CD8-positive, alpha-beta T cell (primary cell): ENCODE measurements at regions of chr19 and their contacts with region 1.

Region 1: GRCh38 chr19:796692-797527 is at the start of gene PTBP1:
- DNase-seq: peak in 8 of 9 experiments; percentile 98 to 100 (median 99)
- ATAC-seq: peak; percentile 85
- H3K4me3 ChIP-seq: peak within 1 kb of the TSS; percentile 78 to 79
- H3K4me3 Mint-ChIP-seq: peak within 1 kb of the TSS; percentile 93
- H3K27ac ChIP-seq: peak within 1 kb of the TSS; percentile 62 to 75
- H3K27ac Mint-ChIP-seq: peak within 1 kb of the TSS; percentile 91
- H3K4me1 ChIP-seq: peaks cover 40% of the 10 kb centered on the region
- H3K4me1 Mint-ChIP-seq: peaks cover 32% of the 10 kb centered on the region
- H3K27me3 ChIP-seq: no peaks in the 10 kb centered on the region
- H3K27me3 Mint-ChIP-seq: no peaks in the 10 kb centered on the region
- CTCF ChIP-seq: no peak
- total RNA-seq, gene PTBP1: 248 to 266 TPM

Region 2: DNA sequence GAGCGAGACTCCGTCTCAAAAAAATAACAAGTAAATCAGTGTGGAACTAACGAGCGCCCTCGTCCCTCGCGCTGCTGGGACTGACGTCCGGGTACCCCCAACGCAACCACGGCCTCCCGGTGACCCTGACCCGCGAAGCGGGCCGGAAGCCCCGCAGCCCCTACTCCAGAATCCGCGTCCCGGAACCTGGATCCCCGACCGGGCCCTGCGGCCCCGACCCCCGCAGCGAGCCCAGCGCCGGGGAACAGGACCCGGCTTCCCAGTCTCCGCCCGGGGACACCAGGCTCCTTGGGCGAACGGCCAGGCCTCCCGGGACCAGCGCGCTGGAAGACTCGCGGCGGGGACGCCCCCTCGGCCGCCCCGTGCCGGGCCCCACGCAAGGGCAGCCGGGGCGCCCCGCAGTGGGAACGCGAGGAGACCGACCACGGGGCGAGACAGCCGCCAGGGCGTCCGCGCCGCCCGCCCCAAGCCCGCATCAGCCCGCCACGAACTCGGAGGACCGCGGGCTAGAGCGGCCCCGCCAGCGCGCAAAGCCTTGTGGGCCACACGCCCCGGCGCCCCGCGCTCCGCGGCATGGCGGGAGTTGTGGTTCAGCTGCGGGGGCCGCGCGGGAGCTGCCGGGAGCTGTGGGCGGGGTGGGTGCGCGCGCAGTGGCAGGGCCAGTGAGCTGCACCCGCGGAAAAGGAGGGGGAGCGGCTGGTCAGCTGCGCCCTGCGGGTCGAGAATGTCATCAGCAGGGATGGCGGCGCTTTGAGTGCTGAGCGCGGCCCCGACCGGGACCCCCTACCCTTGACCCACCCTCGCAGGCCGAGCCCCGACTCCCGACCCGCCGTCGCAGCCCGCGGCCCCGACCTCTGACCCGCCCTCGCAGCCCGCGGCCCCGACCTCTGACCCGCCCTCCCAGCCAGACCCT is 308.1 kb before region 1 on chr19:
- CTCF ChIA-PET with region 1: no interaction called
- POLR2A ChIA-PET with region 1: no interaction called
- intact Hi-C with region 1: loop called in 1 of 2 experiments (anchors 5 kb)
- DNase-seq: peak; percentile 85 to 96 (median 93)
- ATAC-seq: peak; percentile 93
- H3K4me3 ChIP-seq: peak overlapping the region; percentile 55 to 84
- H3K4me3 Mint-ChIP-seq: peak overlapping the region; percentile 83
- H3K27ac ChIP-seq: peak overlapping the region; percentile 74 to 80
- H3K27ac Mint-ChIP-seq: peak overlapping the region; percentile 85
- H3K4me1 ChIP-seq: peaks cover 6% of the 10 kb centered on the region
- H3K4me1 Mint-ChIP-seq: peaks cover 11% of the 10 kb centered on the region
- H3K27me3 ChIP-seq: no peaks in the 10 kb centered on the region
- H3K27me3 Mint-ChIP-seq: peaks cover 8% of the 10 kb centered on the region
- CTCF ChIP-seq: no peak

Region 3: GRCh38 chr19:572140-572742 is 224.7 kb before region 1 on chr19 and contains the start of gene BSG:
- CTCF ChIA-PET with region 1: no interaction called
- POLR2A ChIA-PET with region 1: no interaction called
- intact Hi-C with region 1: loop called (anchors 1 kb)
- DNase-seq: peak; percentile 96 to 100 (median 99)
- ATAC-seq: peak; percentile 79
- H3K4me3 ChIP-seq: peak within 1 kb of the TSS; percentile 85 to 98
- H3K4me3 Mint-ChIP-seq: peak within 1 kb of the TSS; percentile 89
- H3K27ac ChIP-seq: peak within 1 kb of the TSS; percentile 86 to 90
- H3K27ac Mint-ChIP-seq: peak within 1 kb of the TSS; percentile 96
- H3K4me1 ChIP-seq: peaks cover 26% of the 10 kb centered on the region
- H3K4me1 Mint-ChIP-seq: peaks cover 38% of the 10 kb centered on the region
- H3K27me3 ChIP-seq: no peaks in the 10 kb centered on the region
- H3K27me3 Mint-ChIP-seq: no peaks in the 10 kb centered on the region
- CTCF ChIP-seq: no peak
- total RNA-seq, gene BSG: 76.2 to 81.2 TPM

Region 4: DNA sequence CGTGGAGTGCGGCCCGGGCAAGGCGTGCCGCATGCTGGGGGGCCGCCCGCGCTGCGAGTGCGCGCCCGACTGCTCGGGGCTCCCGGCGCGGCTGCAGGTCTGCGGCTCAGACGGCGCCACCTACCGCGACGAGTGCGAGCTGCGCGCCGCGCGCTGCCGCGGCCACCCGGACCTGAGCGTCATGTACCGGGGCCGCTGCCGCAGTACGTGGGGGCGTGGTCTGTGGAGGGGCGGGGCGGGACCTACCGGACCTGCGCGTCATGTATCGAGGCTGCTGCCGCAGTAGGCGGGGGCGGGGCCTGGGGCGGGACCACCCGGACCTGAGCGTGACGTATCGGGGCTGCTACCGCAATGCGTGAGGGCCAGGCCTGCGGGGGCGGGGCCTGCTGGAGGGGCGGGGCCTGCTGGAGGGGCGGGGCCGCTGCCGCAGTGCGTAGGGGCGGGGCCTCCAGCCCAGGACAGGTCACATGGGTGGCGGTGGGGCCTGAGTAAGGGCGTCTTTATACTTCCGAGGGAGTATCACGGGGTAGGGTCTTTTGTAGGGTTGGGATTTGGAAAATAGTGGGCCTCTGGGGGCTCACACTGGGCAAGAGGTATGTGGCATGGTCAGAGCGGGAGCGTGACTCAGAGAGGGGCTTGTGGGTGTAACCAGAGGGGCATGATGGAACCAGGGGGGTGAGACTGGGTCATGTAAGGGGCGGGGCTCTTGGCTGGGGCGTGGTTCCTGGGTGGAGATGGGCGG is 116.5 kb before region 1 on chr19:
- CTCF ChIA-PET with region 1: no interaction called
- POLR2A ChIA-PET with region 1: interaction called, 3 read pairs
- intact Hi-C with region 1: loop called in 1 of 2 experiments (anchors 1 kb)
- DNase-seq: peak; percentile 99 to 100 (median 100)
- ATAC-seq: peak; percentile 79
- H3K4me3 ChIP-seq: peak overlapping the region; percentile 59 to 94
- H3K4me3 Mint-ChIP-seq: peak overlapping the region; percentile 91
- H3K27ac ChIP-seq: peak overlapping the region; percentile 73 to 88
- H3K27ac Mint-ChIP-seq: peak overlapping the region; percentile 97
- H3K4me1 ChIP-seq: peaks cover 20% of the 10 kb centered on the region
- H3K4me1 Mint-ChIP-seq: peaks cover 8% of the 10 kb centered on the region
- H3K27me3 ChIP-seq: peaks cover 0 to 16% of the 10 kb centered on the region in 2 experiments
- H3K27me3 Mint-ChIP-seq: peaks cover 4% of the 10 kb centered on the region
- CTCF ChIP-seq: peak; percentile 37

Region 5: GRCh38 chr19:778910-779653 is 17.8 kb before region 1 on chr19:
- CTCF ChIA-PET with region 1: no interaction called
- POLR2A ChIA-PET with region 1: no interaction called
- intact Hi-C with region 1: no loop called
- DNase-seq: no peak
- ATAC-seq: no peak
- H3K4me3 ChIP-seq: no peak overlapping the region
- H3K4me3 Mint-ChIP-seq: no peak overlapping the region
- H3K27ac ChIP-seq: no peak overlapping the region
- H3K27ac Mint-ChIP-seq: no peak overlapping the region
- H3K4me1 ChIP-seq: no peaks in the 10 kb centered on the region
- H3K4me1 Mint-ChIP-seq: no peaks in the 10 kb centered on the region
- H3K27me3 ChIP-seq: peaks cover 0 to 5% of the 10 kb centered on the region in 2 experiments
- H3K27me3 Mint-ChIP-seq: no peaks in the 10 kb centered on the region
- CTCF ChIP-seq: no peak

Region 6: DNA sequence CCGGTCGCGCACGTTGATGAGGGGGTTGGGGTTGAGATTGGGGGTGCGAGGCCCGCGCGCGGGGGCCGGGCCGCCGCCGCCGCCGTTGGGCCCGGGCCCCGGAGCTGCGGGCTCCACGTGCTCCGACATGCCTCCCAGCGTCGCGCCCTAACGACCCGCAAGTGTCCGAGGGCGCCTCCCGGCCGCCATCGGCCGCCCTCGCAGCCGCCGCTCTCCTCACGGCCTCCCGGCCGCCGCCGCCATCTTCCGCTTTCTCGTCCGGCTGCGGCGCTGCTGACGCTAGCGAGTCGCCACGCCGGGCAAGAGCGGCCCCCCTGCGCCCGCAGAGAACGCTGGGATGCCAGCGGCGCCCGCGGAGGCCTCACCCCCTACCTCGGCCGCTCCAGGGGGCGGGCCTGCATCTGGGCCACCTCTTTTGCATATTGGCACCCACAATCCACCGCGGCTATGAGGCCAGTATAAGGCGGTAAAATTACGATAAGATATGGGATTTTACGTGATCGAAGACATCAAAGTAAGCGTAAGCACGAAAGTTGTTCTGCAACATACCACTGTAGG is 224.0 kb after region 1 on chr19 and contains the start of gene TMEM259:
- CTCF ChIA-PET with region 1: no interaction called
- POLR2A ChIA-PET with region 1: no interaction called
- intact Hi-C with region 1: loop called in 1 of 2 experiments (anchors 1 kb)
- DNase-seq: peak; percentile 94 to 98 (median 98)
- ATAC-seq: peak; percentile 86
- H3K4me3 ChIP-seq: peak within 1 kb of the TSS; percentile 89 to 94
- H3K4me3 Mint-ChIP-seq: peak within 1 kb of the TSS; percentile 90
- H3K27ac ChIP-seq: peak within 1 kb of the TSS; percentile 97 to 99
- H3K27ac Mint-ChIP-seq: peak within 1 kb of the TSS; percentile 100
- H3K4me1 ChIP-seq: peaks cover 43% of the 10 kb centered on the region
- H3K4me1 Mint-ChIP-seq: peaks cover 45% of the 10 kb centered on the region
- H3K27me3 ChIP-seq: no peaks in the 10 kb centered on the region
- H3K27me3 Mint-ChIP-seq: no peaks in the 10 kb centered on the region
- CTCF ChIP-seq: no peak
- total RNA-seq, gene TMEM259: 408 to 443 TPM

Region 7: DNA sequence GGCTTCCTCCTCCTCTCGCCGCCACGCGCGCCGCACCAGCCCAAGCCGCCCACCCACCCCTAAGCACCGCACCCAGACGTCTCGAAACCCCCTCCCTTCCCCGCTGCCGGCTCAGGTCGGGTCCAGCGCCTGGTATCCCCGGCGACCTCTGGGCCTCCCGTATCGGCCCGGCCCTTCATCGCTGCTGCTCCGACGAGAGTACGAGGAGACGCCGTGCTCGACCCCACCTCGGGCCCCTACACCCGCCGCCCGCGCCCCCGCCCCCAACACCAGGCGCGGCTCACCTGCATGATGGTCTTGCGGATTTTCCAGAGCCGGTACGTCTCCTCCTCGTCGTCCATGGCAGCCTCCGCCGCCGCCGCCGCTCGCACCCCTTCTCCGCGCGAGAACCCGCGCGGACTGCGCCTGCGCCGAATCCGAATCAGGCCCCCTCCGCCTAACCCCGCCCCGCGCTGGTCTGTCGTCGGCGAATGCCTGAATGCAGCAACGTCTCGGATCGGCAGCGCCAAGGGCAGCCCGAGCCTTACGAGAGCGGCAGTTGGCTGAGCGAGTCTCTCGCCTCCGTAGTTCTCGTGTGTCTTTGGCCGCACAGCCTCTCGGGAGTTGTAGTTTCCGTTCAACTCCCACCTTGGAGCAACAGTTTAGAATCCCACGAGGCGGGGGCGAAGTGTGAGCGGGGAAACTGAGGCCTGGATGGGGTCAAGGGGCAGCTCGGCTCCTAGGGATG is 298.2 kb after region 1 on chr19 and contains the start of gene POLR2E:
- CTCF ChIA-PET with region 1: no interaction called
- POLR2A ChIA-PET with region 1: no interaction called
- intact Hi-C with region 1: loop called (anchors 2 to 5 kb)
- DNase-seq: peak; percentile 97 to 99 (median 99)
- ATAC-seq: peak; percentile 93
- H3K4me3 ChIP-seq: peak within 1 kb of the TSS; percentile 79 to 86
- H3K4me3 Mint-ChIP-seq: peak within 1 kb of the TSS; percentile 94
- H3K27ac ChIP-seq: peak within 1 kb of the TSS; percentile 58 to 64
- H3K27ac Mint-ChIP-seq: peak within 1 kb of the TSS; percentile 90
- H3K4me1 ChIP-seq: peaks cover 51% of the 10 kb centered on the region
- H3K4me1 Mint-ChIP-seq: peaks cover 41% of the 10 kb centered on the region
- H3K27me3 ChIP-seq: no peaks in the 10 kb centered on the region
- H3K27me3 Mint-ChIP-seq: no peaks in the 10 kb centered on the region
- CTCF ChIP-seq: no peak
- total RNA-seq, gene POLR2E: 75.3 to 76.2 TPM